Activated B cell treated with CpG ODN at 0.5 μM for 24 hours (primary cell): ENCODE measurements at regions of chr2 and their contacts with region 1.

Region 1: DNA sequence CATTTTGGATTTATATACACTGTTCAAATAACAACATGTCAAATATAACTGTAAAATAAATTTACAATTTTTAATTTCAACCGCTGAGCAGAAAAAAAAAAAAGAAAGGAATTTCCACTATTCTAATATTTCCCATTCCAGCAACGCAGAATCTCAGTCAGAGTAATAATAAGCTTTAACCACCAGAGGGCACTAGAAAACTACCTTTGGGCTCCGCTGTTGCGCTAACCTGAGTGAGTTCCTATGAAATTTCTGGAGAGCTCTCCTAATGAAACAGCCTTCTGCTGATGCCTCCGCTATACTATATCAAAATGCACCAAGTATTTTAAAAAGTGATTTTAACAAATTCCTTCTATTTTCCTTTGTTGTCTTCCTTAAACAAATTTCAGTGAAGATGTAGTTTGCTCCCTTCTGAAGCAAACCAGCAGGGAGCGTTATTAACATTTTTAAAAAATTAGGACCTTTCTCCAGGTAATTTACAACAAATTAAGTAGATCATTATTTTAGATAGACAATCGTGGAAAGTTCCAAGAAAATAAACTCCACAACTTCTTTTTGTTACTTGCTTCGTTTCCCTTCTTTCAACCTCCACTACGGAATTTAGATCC is 23.0 kb downstream of the ERMN start:
- DNase-seq: no peak
- ATAC-seq: peak; percentile 69
- H3K4me3 Mint-ChIP-seq: no peak overlapping the region
- H3K27ac Mint-ChIP-seq: no peak overlapping the region
- H3K4me1 Mint-ChIP-seq: peaks cover 6% of the 10 kb centered on the region
- H3K27me3 Mint-ChIP-seq: peaks cover 13% of the 10 kb centered on the region
- CTCF ChIP-seq: peak; percentile 53

Region 2: GRCh38 chr2:157221394-157221988 is 81.1 kb before region 1 on chr2:
- CTCF ChIA-PET with region 1: no interaction called
- POLR2A ChIA-PET with region 1: no interaction called
- intact Hi-C with region 1: no loop called
- DNase-seq: no peak
- ATAC-seq: no peak
- H3K4me3 Mint-ChIP-seq: no peak overlapping the region
- H3K27ac Mint-ChIP-seq: no peak overlapping the region
- H3K4me1 Mint-ChIP-seq: no peaks in the 10 kb centered on the region
- H3K27me3 Mint-ChIP-seq: no peaks in the 10 kb centered on the region
- CTCF ChIP-seq: no peak

Region 3: GRCh38 chr2:157523270-157524247 is 221.0 kb after region 1 on chr2:
- CTCF ChIA-PET with region 1: no interaction called
- POLR2A ChIA-PET with region 1: no interaction called
- intact Hi-C with region 1: no loop called
- DNase-seq: no peak
- ATAC-seq: peak; percentile 93
- H3K4me3 Mint-ChIP-seq: peak overlapping the region; percentile 17
- H3K27ac Mint-ChIP-seq: peak overlapping the region; percentile 24
- H3K4me1 Mint-ChIP-seq: peaks cover 31% of the 10 kb centered on the region
- H3K27me3 Mint-ChIP-seq: no peaks in the 10 kb centered on the region
- CTCF ChIP-seq: no peak

Region 4: GRCh38 chr2:157596992-157597681 is 294.5 kb after region 1 on chr2:
- CTCF ChIA-PET with region 1: interaction called, 99 read pairs
- POLR2A ChIA-PET with region 1: no interaction called
- intact Hi-C with region 1: loop called (anchors 1 kb)
- DNase-seq: peak; percentile 42
- ATAC-seq: peak; percentile 80
- H3K4me3 Mint-ChIP-seq: peak overlapping the region; percentile 41
- H3K27ac Mint-ChIP-seq: no peak overlapping the region
- H3K4me1 Mint-ChIP-seq: peaks cover 8% of the 10 kb centered on the region
- H3K27me3 Mint-ChIP-seq: peaks cover 3% of the 10 kb centered on the region
- CTCF ChIP-seq: no peak

Region 5: DNA sequence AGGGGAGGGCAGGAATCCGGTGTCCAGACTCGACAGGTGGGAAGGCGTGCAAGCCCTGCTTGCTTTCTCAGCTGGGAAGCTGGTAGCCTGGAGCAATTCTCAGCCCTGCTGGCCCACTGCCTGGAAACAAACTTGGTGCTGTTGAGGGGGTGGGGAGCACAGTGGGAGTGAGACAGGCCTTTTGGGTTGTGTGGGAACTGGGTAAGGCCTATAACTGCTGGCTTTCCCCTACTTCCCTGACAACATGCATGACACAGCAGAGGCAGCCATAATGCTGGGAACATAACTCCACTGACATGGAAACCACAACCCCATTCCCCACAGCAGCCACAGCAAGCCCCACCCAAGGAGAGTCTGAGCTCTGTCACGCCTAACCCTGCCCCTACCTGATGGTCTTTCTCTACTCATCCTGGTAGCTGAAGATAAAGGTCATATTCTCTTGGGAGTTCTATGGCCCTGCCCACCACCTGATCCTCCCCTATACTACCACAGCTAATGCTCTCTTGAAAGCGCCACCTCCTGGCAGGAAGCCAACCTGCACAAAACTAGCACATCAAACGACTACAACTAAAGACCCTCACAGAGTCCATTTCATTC is 449.0 kb after region 1 on chr2:
- CTCF ChIA-PET with region 1: interaction called, 6 read pairs
- POLR2A ChIA-PET with region 1: no interaction called
- intact Hi-C with region 1: loop called (anchors 1 kb)
- DNase-seq: no peak
- ATAC-seq: peak; percentile 18
- H3K4me3 Mint-ChIP-seq: no peak overlapping the region
- H3K27ac Mint-ChIP-seq: no peak overlapping the region
- H3K4me1 Mint-ChIP-seq: peaks cover 4% of the 10 kb centered on the region
- H3K27me3 Mint-ChIP-seq: no peaks in the 10 kb centered on the region
- CTCF ChIP-seq: no peak

Region 6: DNA sequence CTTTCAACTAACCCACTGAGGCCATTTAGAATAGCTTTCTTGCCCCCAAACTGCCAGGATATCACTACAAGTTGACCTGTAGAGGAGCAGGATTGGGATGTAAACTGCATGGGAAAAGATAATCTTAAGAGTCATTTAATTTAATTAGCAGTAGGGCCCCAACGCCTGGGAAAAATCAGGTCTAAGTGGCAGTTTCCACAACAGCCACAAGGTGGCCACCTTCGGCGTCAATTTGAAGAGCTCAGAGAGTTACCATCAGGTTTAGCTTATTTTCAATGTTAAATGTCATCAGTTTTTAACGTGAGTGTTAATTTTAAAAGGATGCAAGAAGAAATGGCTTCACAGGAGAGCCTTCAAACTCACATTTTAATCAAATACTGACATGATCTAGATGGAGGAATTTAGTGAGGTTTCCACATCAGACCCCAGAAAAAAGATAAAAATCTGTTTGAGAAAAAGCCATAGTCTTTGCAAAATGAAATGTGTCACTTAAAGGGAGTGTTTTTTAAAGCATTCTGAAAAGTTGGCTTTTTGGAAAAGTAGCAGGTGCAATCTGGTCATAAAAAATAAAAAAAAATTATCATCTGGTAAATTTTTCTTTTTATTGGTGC is 721.8 kb after region 1 on chr2:
- CTCF ChIA-PET with region 1: interaction called, 16 read pairs
- POLR2A ChIA-PET with region 1: interaction called, 4 read pairs
- intact Hi-C with region 1: no loop called
- DNase-seq: no peak
- ATAC-seq: peak; percentile 54
- H3K4me3 Mint-ChIP-seq: no peak overlapping the region
- H3K27ac Mint-ChIP-seq: no peak overlapping the region
- H3K4me1 Mint-ChIP-seq: no peaks in the 10 kb centered on the region
- H3K27me3 Mint-ChIP-seq: no peaks in the 10 kb centered on the region
- CTCF ChIP-seq: peak; percentile 93

Region 7: DNA sequence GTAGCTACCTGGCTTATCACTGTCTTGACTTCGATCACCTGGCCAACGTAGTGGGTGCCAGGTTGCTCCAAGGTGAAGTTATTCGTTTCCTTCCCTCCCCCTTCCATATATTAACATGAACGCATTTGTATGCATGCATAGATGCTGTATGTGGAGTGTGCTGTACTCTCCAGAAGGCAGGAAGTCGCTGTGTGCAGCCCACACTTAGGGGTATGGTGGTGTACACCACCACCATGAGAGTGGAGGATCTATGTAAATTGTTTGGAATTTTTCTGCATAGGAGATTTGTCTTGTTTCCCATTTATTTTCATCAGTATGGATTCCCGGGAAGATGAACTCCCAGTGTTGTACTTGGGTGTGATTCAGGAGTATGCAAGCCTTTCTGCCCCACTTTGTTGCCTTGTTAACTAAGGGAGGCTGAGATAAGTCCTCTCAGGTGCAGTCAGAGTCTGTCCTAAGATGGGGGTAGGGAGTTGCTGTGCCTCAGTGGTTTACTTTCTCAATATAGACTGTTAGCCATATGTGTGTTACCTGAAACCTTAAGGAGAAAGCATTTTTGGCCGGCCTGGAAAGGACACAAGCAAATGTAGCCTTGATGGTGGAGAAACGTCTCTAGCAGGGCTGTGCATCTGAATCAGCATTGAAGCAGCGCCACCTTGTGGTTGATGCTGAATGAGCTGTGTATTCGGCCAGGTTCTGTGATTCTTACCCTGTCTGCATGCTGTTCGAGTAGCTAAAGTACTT is 1815.7 kb after region 1 on chr2:
- CTCF ChIA-PET with region 1: no interaction called
- POLR2A ChIA-PET with region 1: no interaction called
- intact Hi-C with region 1: loop called (anchors 2 kb)
- DNase-seq: peak; percentile 31
- ATAC-seq: peak; percentile 71
- H3K4me3 Mint-ChIP-seq: no peak overlapping the region
- H3K27ac Mint-ChIP-seq: no peak overlapping the region
- H3K4me1 Mint-ChIP-seq: peaks cover 3% of the 10 kb centered on the region
- H3K27me3 Mint-ChIP-seq: no peaks in the 10 kb centered on the region
- CTCF ChIP-seq: no peak